Motor neuron (in vitro differentiated cells): ENCODE measurements at regions of chr12 and their contacts with region 1.

Region 1: GRCh38 chr12:108879615-108880254 is at the start of gene DAO:
- ATAC-seq: no peak
- H3K4me3 ChIP-seq: no peak within 1 kb of the TSS
- H3K27ac ChIP-seq: no peak within 1 kb of the TSS
- H3K4me1 ChIP-seq: no peaks in the 10 kb centered on the region
- total RNA-seq, gene DAO: 0.15 to 1.4 (median 0.43) TPM in 7 of 8 experiments, not detected in the other

Region 2: DNA sequence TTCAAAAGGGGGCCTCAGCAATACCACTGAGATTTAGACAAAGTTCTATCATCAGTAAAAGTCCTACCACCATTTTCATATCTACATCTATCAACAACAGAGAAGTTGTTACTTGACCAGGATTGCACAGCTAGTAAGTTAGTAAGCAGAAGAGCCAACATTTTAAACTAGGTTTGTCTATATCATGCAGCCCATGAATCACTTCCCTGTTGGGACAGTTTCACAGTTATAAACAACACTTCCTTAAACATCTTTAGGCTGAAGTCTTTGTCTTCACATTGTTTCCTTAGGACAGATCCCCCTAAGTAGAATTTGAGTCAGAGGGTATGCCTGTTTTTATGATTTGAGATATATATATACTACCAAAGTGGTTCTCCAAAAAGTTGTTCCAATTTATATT is 68.6 kb after region 1 on chr12:
- in situ Hi-C with region 1: loop called in 1 of 9 experiments (anchors 10 kb)
- ATAC-seq: no peak
- H3K4me3 ChIP-seq: no peak overlapping the region
- H3K27ac ChIP-seq: no peak overlapping the region
- H3K4me1 ChIP-seq: no peaks in the 10 kb centered on the region